PC-9 (cell line): ENCODE measurements at regions of chr19 and their contacts with region 1.

Region 1: DNA sequence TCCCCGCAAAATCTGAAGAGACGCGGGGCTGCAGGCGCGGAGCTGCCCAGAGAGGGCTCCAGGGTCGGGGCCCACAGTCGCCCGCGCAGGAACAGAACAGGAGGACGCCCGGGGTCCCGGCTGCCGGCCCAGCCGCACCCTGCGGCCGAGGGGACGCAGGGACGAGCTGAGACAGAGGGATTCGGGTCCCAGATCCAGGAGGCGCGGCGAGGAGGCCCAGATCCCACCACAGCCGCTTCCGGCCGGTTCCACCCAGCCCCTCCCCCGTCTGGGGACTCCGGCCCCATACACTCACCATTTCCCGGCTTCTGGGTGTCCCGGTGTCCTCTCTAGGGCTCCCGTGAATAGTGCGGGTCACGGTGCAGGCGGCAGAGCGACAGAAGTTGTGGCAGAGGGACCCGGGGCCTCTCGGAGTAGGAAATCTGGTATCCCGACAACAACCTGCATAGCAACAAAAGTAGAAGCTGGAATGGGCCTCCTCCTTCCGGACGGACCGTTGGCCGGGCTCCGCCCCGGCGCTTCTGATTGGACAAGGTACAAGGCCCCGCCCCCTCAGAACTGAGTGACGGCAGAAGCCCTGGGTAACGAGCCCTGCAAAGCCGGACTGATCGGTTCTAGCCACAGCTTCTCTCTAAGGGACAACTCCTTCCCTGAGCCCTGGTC is at the start of gene ZNF20:
- DNase-seq: peak; percentile 93 to 96
- H3K4me3 ChIP-seq: peak within 1 kb of the TSS; percentile 76
- H3K27ac ChIP-seq: no peak within 1 kb of the TSS
- H3K4me1 ChIP-seq: peaks cover 8% of the 10 kb centered on the region; the same call in 1 of the 2 replicates
- H3K27me3 ChIP-seq: no peaks in the 10 kb centered on the region
- CTCF ChIP-seq: no peak
- total RNA-seq, gene ZNF20: 2.9 and 8.6 TPM in 2 replicates

Region 2: GRCh38 chr19:11814029-11814699 is 325.9 kb before region 1 on chr19 and contains the start of gene ZNF440:
- CTCF ChIA-PET with region 1: no interaction called
- POLR2A ChIA-PET with region 1: no interaction called
- intact Hi-C with region 1: loop called (anchors 1 kb)
- DNase-seq: peak; percentile 94 to 96
- H3K4me3 ChIP-seq: peak within 1 kb of the TSS; percentile 78
- H3K27ac ChIP-seq: peak within 1 kb of the TSS; percentile 40
- H3K4me1 ChIP-seq: peaks cover 5% of the 10 kb centered on the region; the same call in 1 of the 2 replicates
- H3K27me3 ChIP-seq: no peaks in the 10 kb centered on the region
- CTCF ChIP-seq: no peak
- total RNA-seq, gene ZNF440: 12.5 and 13.1 TPM in 2 replicates

Region 3: GRCh38 chr19:11924886-11925650 is 214.9 kb before region 1 on chr19 and contains the start of gene ZNF700:
- CTCF ChIA-PET with region 1: interaction called, 6 read pairs
- POLR2A ChIA-PET with region 1: interaction called, 3 read pairs
- intact Hi-C with region 1: loop called (anchors 1 kb)
- DNase-seq: peak; percentile 93 to 94
- H3K4me3 ChIP-seq: peak within 1 kb of the TSS; percentile 91
- H3K27ac ChIP-seq: peak within 1 kb of the TSS; percentile 53
- H3K4me1 ChIP-seq: peaks cover 21% of the 10 kb centered on the region
- H3K27me3 ChIP-seq: no peaks in the 10 kb centered on the region
- CTCF ChIP-seq: no peak
- total RNA-seq, gene ZNF700: 7.6 and 7.8 TPM in 2 replicates

Region 4: GRCh38 chr19:12064590-12065538 is 75.2 kb before region 1 on chr19 and contains the start of gene ZNF844:
- CTCF ChIA-PET with region 1: interaction called, 25 read pairs
- POLR2A ChIA-PET with region 1: no interaction called
- intact Hi-C with region 1: no loop called
- DNase-seq: peak; percentile 83 to 95
- H3K4me3 ChIP-seq: peak within 1 kb of the TSS; percentile 67
- H3K27ac ChIP-seq: no peak within 1 kb of the TSS
- H3K4me1 ChIP-seq: no peaks in the 10 kb centered on the region
- H3K27me3 ChIP-seq: no peaks in the 10 kb centered on the region
- CTCF ChIP-seq: no peak
- total RNA-seq, gene ZNF844: 4.9 and 6.6 TPM in 2 replicates

Region 5: GRCh38 chr19:12156223-12157058 is 16.4 kb after region 1 on chr19 and contains the start of gene ZNF625:
- CTCF ChIA-PET with region 1: no interaction called
- POLR2A ChIA-PET with region 1: interaction called, 17 read pairs
- intact Hi-C with region 1: no loop called
- DNase-seq: peak; percentile 71 to 81
- H3K4me3 ChIP-seq: peak within 1 kb of the TSS; percentile 63
- H3K27ac ChIP-seq: no peak within 1 kb of the TSS
- H3K4me1 ChIP-seq: peaks cover 5% of the 10 kb centered on the region; the same call in 1 of the 2 replicates
- H3K27me3 ChIP-seq: no peaks in the 10 kb centered on the region
- CTCF ChIP-seq: no peak
- total RNA-seq, gene ZNF625: 5.7 and 6.4 TPM in 2 replicates

Region 6: GRCh38 chr19:12294249-12295158 is 154.5 kb after region 1 on chr19 and contains the start of gene ZNF44:
- CTCF ChIA-PET with region 1: no interaction called
- POLR2A ChIA-PET with region 1: no interaction called
- intact Hi-C with region 1: no loop called
- DNase-seq: peak; percentile 97 to 98
- H3K4me3 ChIP-seq: peak within 1 kb of the TSS; percentile 67
- H3K27ac ChIP-seq: no peak within 1 kb of the TSS
- H3K4me1 ChIP-seq: peaks cover under 1% of the 10 kb centered on the region; the same call in 1 of the 2 replicates
- H3K27me3 ChIP-seq: no peaks in the 10 kb centered on the region
- CTCF ChIP-seq: no peak
- total RNA-seq, gene ZNF44: 4.0 and 5.0 TPM in 2 replicates